Activated T-helper 1 cell treated with anti-CD3 and anti-CD28 coated beads, Interleukin-12 subunit alpha, Interleukin-12 subunit beta, Interleukin-2, Interleukin-4 antibody, amounts not matched to agents 30 ng/mL and 10 ng/mL and 1 ng/mL, durations not matched to agents 14 hours and 24 hours and 36 hours (primary cell): ENCODE measurements at regions of chr5 and their contacts with region 1.

Region 1: DNA sequence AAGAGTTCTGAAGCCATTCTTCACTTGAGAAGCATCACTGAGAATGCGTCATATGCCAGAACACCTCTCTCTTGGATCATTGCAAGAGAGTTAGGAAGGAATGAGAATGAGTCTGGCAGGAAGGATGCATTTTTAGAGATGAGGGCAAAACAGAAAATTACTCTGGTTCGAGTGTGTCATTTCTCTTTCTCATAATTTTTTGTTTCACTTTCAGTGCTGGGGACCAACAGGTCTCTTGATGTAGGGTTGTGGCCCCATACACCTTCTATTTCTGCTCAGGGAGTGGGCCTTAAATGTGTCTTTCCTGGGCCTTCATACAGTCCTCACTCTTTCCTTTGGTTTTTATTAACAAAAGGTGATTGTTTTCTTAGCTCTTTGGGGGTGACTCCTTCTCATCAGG is 302.4 kb downstream of the NR3C1 start:
- DNase-seq: peak; percentile 13
- H3K4me3 Mint-ChIP-seq: peak overlapping the region; percentile 48
- H3K27ac Mint-ChIP-seq: peak overlapping the region; percentile 92
- H3K4me1 Mint-ChIP-seq: peaks cover 53% of the 10 kb centered on the region
- H3K27me3 Mint-ChIP-seq: no peaks in the 10 kb centered on the region

Region 2: GRCh38 chr5:143023411-143024096 is 77.6 kb before region 1 on chr5:
- intact Hi-C with region 1: loop called (anchors 5 kb)
- DNase-seq: peak; percentile 50
- H3K4me3 Mint-ChIP-seq: peak overlapping the region; percentile 4
- H3K27ac Mint-ChIP-seq: peak overlapping the region; percentile 45
- H3K4me1 Mint-ChIP-seq: peaks cover 67% of the 10 kb centered on the region
- H3K27me3 Mint-ChIP-seq: peaks cover 4% of the 10 kb centered on the region

Region 3: GRCh38 chr5:143066556-143067281 is 34.4 kb before region 1 on chr5:
- intact Hi-C with region 1: loop called (anchors 1 kb)
- DNase-seq: no peak
- H3K4me3 Mint-ChIP-seq: peak overlapping the region; percentile 38
- H3K27ac Mint-ChIP-seq: peak overlapping the region; percentile 78
- H3K4me1 Mint-ChIP-seq: peaks cover 55% of the 10 kb centered on the region
- H3K27me3 Mint-ChIP-seq: no peaks in the 10 kb centered on the region

Region 4: DNA sequence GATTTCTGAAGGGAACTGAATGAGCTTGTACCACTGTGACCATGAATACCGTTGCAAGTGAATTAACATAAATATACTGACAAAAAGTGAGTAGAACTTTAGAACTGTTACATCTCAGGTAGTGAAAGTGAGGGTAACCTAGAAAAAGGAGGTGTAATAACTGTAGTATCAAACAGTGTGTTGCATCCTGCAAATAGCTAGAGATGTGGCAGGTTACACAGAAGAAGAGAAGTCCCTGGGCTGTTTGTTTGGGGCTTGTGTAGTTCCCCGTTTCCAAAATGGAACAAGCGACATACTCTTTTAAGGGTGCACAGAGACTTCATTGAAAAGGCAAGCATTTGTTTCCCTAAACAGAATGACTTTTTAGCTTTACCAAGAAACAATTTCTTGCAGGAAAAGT is 87.6 kb after region 1 on chr5:
- intact Hi-C with region 1: loop called (anchors 1 kb)
- DNase-seq: no peak
- H3K4me3 Mint-ChIP-seq: peak overlapping the region; percentile 34
- H3K27ac Mint-ChIP-seq: peak overlapping the region; percentile 71
- H3K4me1 Mint-ChIP-seq: peaks cover 54% of the 10 kb centered on the region
- H3K27me3 Mint-ChIP-seq: no peaks in the 10 kb centered on the region

Region 5: DNA sequence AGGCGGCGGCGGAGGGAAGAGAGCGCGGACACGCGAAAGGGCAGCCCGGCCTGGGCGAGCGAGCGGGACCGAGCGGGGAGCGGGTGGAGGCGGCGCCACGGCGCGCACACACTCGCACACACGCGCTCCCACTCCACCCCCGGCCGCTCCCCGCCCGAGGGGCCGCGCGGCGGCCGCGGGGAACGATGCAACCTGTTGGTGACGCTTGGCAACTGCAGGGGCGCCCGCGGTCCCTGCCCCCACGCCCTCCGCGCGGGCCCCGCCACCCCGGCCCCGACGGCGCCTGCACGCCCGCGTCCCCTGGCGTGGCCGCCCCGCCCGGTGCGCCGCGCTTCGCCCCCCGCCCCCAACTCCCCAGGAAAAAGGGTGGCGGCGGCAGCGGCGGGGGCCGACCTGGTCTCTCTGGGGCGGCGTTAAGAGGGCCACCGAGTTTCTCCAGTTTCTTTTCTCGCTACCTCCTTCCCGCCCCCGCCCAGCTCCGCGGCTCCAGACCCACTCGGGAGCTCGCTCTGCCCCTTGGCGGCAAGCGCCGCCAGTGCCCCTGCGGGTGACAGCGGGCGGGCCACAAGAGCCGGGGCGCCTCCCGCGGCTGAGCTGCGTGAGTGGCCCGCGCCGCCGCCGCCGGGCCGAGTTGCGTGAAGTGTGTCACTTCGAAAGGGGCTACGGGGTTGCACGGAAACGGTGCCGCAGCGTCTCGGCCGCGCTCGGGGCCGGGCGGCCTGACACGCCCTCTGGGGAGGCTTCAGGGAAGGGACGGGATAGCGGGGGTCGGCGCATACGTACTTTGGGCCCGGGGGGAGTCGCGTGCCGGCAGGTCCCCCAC is 302.7 kb after region 1 on chr5 and contains the start of gene NR3C1:
- intact Hi-C with region 1: loop called (anchors 1 kb)
- DNase-seq: peak; percentile 82
- H3K4me3 Mint-ChIP-seq: peak within 1 kb of the TSS; percentile 95
- H3K27ac Mint-ChIP-seq: peak within 1 kb of the TSS; percentile 99
- H3K4me1 Mint-ChIP-seq: peaks cover 48% of the 10 kb centered on the region
- H3K27me3 Mint-ChIP-seq: no peaks in the 10 kb centered on the region
- total RNA-seq, gene NR3C1: 62.7 TPM in 2 replicates

Region 6: GRCh38 chr5:143968011-143968878 is 867.1 kb after region 1 on chr5:
- intact Hi-C with region 1: loop called (anchors 5 kb)
- DNase-seq: no peak
- H3K4me3 Mint-ChIP-seq: no peak overlapping the region
- H3K27ac Mint-ChIP-seq: no peak overlapping the region
- H3K4me1 Mint-ChIP-seq: no peaks in the 10 kb centered on the region
- H3K27me3 Mint-ChIP-seq: peaks cover 17% of the 10 kb centered on the region